ENCODE measurements at regions of chr2 and their contacts with region 1.

Region 1: DNA sequence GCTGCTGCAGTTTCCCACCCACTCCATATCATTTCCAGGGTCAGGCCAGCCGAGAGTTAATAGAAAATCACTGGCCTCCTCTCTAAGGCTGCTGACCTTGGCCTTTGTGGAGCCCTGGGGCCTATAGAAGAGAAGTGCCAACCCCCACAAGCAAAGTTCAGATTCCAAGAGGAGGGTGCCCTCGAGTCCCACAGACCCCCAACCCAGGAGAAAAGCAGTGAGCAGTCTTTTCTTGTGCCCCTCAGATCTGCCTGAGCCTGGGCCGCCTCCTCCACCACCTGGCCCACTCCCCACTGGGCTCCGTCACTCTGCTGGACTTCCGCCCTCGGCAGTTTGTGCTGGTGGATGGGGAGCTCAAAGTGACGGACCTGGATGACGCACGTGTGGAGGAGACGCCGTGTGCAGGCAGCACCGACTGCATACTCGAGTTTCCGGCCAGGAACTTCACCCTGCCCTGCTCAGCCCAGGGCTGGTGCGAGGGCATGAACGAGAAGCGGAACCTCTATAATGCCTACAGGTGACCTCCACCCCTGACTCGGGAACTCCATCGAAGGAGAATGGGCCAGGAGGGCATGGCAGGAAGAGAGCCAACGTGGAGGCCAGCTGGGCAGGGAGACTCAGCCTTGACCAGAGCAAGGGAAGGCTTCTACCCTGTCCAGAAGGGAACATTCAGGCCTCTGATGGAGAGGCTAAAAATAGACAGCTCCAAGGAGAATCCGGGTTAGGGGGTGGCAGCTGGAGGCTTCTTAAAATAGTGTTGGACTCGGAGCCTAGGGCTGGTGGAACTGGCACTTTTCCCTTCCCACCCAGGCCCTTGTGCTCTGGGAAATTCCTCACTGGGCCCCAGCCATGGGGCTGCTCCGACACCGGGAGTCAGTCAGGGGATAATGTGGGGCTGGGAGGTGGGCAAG is 6.2 kb downstream of the PKDCC start:
- DNase-seq: peak; percentile 93
- H3K4me3 ChIP-seq: peak overlapping the region in 2 of 4 donors; percentile 6 to 68
- H3K27ac ChIP-seq: peak overlapping the region; percentile 96 to 99 (median 96)
- H3K4me1 ChIP-seq: peaks cover 0 to 82% (median 78%) of the 10 kb centered on the region in 4 donors
- H3K27me3 ChIP-seq: no peaks in the 10 kb centered on the region
- CTCF ChIP-seq: no peak
- EP300 ChIP-seq: peak; percentile 35 to 91 (median 84)
- POLR2A ChIP-seq: peak in 1 of 2 donors; percentile 19

Region 2: DNA sequence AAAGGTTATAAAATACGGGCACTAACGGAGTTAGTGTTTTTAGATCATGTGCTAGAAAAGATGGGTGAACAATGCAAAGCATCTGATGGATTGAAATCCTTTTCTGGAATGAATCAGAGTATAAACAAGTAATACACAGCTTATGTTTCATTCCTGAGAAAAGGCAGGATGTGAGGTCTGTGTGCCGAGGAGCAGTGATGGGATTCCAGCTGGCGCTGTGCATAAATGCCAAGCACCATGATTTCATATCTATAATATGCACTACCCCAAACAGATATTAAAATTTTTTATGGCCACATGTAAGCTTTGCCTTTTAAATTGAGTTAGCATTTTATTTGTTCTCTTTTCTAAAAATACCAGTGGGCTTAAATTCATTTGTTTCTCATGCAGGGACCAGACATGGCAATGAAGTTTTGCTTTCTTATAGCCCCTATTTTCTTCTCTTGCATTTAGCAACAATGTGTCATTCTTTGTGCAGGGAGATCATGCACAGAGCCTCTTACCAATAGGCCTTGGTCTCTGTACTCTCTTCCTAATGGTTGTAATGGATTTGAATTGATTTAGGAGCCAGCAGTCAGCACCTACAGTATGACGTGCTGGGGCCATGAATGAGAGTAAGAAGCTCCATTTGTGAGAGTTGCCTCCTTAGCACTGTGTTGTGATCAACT is 1926.0 kb before region 1 on chr2:
- intact Hi-C with region 1: loop called (anchors 5 kb)
- DNase-seq: no peak
- H3K4me3 ChIP-seq: no peak overlapping the region
- H3K27ac ChIP-seq: peak overlapping the region in 3 of 4 donors; percentile 61 to 83 (median 77)
- H3K4me1 ChIP-seq: peaks cover 0 to 79% (median 60%) of the 10 kb centered on the region in 4 donors
- H3K27me3 ChIP-seq: no peaks in the 10 kb centered on the region
- CTCF ChIP-seq: no peak
- EP300 ChIP-seq: no peak
- POLR2A ChIP-seq: no peak

Region 3: DNA sequence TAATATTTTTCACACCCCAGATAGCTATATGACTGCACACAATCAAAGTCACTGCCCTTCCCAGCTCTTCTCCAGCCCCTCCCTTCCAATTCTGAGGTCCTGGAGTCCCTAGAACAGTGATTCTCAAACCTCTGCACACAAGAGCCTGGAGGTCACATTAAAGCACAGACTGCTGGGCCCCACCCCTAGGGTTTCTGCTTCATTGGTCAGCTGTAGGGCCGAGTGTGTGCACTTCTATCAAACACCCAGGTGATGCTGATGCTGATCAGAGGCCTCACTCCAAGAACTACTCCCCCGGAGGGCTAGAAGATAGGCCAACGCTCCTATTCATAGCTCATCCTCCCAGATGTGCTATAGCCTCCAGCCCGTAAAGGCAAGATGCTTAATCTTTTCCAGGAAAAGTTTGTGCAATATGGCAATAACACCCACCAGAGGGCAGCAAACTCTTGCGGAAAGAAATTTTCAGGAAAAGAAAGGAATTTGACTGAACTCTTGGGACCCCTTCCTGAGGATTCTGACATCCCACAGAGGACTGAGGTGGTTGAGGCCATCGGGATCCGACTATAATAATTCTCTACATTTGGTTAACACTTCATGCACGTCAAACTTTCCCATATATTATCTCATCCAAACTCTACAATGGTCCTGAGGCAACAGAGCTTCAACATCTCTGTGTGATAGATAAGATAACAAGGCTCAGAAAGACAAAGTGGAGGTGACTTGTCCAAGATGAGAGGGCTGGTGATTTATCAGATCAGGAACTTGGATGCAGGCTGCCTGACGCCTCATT is 200.4 kb before region 1 on chr2:
- intact Hi-C with region 1: no loop called
- DNase-seq: no peak
- H3K4me3 ChIP-seq: no peak overlapping the region
- H3K27ac ChIP-seq: no peak overlapping the region
- H3K4me1 ChIP-seq: no peaks in the 10 kb centered on the region
- H3K27me3 ChIP-seq: peaks cover 0 to 6% (median 0%) of the 10 kb centered on the region in 3 donors
- CTCF ChIP-seq: peak; percentile 19 to 71 (median 68)
- EP300 ChIP-seq: no peak
- POLR2A ChIP-seq: no peak

Region 4: DNA sequence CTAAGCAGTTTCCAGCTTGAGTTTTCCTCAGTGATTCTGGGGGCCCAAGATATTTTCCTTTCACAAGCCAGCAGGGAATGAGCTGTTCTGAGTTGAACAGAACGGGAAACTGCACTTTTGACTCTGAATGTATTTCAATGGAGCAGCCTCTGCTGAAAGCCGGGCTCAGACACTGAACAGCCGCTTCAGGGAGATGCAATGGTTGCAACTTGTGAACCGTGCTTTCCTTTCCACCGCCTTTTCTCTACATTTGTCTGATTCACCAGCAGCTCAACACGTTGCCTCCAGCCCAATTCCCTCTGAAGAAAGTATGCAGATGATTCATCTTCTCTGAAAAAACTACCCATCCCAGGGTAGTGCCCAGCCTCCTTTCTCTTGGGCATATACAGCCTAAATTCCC is 125.5 kb before region 1 on chr2:
- intact Hi-C with region 1: loop called (anchors 2 kb)
- DNase-seq: no peak
- H3K4me3 ChIP-seq: no peak overlapping the region
- H3K27ac ChIP-seq: peak overlapping the region in 3 of 4 donors; percentile 83 to 90 (median 84)
- H3K4me1 ChIP-seq: peaks cover 0 to 83% (median 81%) of the 10 kb centered on the region in 4 donors
- H3K27me3 ChIP-seq: no peaks in the 10 kb centered on the region
- CTCF ChIP-seq: no peak
- EP300 ChIP-seq: no peak
- POLR2A ChIP-seq: no peak